CD8-positive, alpha-beta T cell (primary cell): ENCODE measurements at regions of chr17 and their contacts with region 1.

Region 1: GRCh38 chr17:56779898-56780733 is 53.6 kb downstream of the C17orf67 start:
- DNase-seq: peak; percentile 77 to 93 (median 84)
- ATAC-seq: peak; percentile 97
- H3K4me3 ChIP-seq: peak overlapping the region; percentile 44 to 61
- H3K4me3 Mint-ChIP-seq: peak overlapping the region; percentile 93
- H3K27ac ChIP-seq: peak overlapping the region; percentile 63 to 71
- H3K27ac Mint-ChIP-seq: peak overlapping the region; percentile 95
- H3K4me1 ChIP-seq: peaks cover 14% of the 10 kb centered on the region
- H3K4me1 Mint-ChIP-seq: peaks cover 18% of the 10 kb centered on the region
- H3K27me3 ChIP-seq: no peaks in the 10 kb centered on the region
- H3K27me3 Mint-ChIP-seq: no peaks in the 10 kb centered on the region
- CTCF ChIP-seq: peak; percentile 99

Region 2: GRCh38 chr17:56499799-56500388 is 280.2 kb before region 1 on chr17:
- CTCF ChIA-PET with region 1: interaction called, 7 read pairs
- POLR2A ChIA-PET with region 1: no interaction called
- intact Hi-C with region 1: loop called in 1 of 2 experiments (anchors 5 kb)
- DNase-seq: peak in 4 of 9 experiments; percentile 11 to 39 (median 15)
- ATAC-seq: no peak
- H3K4me3 ChIP-seq: no peak overlapping the region
- H3K4me3 Mint-ChIP-seq: no peak overlapping the region
- H3K27ac ChIP-seq: no peak overlapping the region
- H3K27ac Mint-ChIP-seq: no peak overlapping the region
- H3K4me1 ChIP-seq: no peaks in the 10 kb centered on the region
- H3K4me1 Mint-ChIP-seq: no peaks in the 10 kb centered on the region
- H3K27me3 ChIP-seq: no peaks in the 10 kb centered on the region
- H3K27me3 Mint-ChIP-seq: no peaks in the 10 kb centered on the region
- CTCF ChIP-seq: peak; percentile 39

Region 3: DNA sequence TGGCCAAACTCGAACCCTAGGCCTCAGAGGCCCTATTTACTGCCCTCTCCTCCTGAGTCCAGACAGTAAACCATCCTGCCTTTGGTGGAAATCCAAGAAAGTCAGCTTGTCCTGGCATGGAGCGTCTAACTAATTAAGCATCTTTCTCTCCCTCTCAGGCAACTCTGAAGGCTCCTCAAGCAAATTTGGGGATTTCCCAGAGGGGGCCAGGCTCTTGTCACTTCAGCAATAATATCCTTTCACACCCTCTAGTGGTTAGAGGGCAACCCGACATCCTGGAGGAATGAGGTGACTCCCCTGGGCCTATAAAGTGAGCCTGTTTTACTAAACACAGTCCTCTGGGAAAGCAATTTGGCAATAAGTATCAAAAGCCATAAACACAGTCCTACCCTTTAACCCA is 126.2 kb before region 1 on chr17:
- CTCF ChIA-PET with region 1: interaction called, 7 read pairs
- POLR2A ChIA-PET with region 1: no interaction called
- intact Hi-C with region 1: loop called in 1 of 2 experiments (anchors 1 kb)
- DNase-seq: peak; percentile 17 to 86 (median 58)
- ATAC-seq: peak; percentile 99
- H3K4me3 ChIP-seq: no peak overlapping the region
- H3K4me3 Mint-ChIP-seq: no peak overlapping the region
- H3K27ac ChIP-seq: no peak overlapping the region
- H3K27ac Mint-ChIP-seq: peak overlapping the region; percentile 69
- H3K4me1 ChIP-seq: peaks cover 4% of the 10 kb centered on the region
- H3K4me1 Mint-ChIP-seq: peaks cover 6% of the 10 kb centered on the region
- H3K27me3 ChIP-seq: no peaks in the 10 kb centered on the region
- H3K27me3 Mint-ChIP-seq: peaks cover 11% of the 10 kb centered on the region
- CTCF ChIP-seq: peak; percentile 56

Region 4: GRCh38 chr17:56707312-56708219 is 72.5 kb before region 1 on chr17:
- CTCF ChIA-PET with region 1: no interaction called
- POLR2A ChIA-PET with region 1: no interaction called
- intact Hi-C with region 1: no loop called
- DNase-seq: no peak
- ATAC-seq: no peak
- H3K4me3 ChIP-seq: no peak overlapping the region
- H3K4me3 Mint-ChIP-seq: no peak overlapping the region
- H3K27ac ChIP-seq: no peak overlapping the region
- H3K27ac Mint-ChIP-seq: no peak overlapping the region
- H3K4me1 ChIP-seq: no peaks in the 10 kb centered on the region
- H3K4me1 Mint-ChIP-seq: no peaks in the 10 kb centered on the region
- H3K27me3 ChIP-seq: no peaks in the 10 kb centered on the region
- H3K27me3 Mint-ChIP-seq: peaks cover 11% of the 10 kb centered on the region
- CTCF ChIP-seq: no peak